ENCODE measurements at regions of chr4 and their contacts with region 1.

Region 1: GRCh38 chr4:184733654-184734524 is at the start of gene CENPU:
- DNase-seq: peak; percentile 96
- H3K4me3 Mint-ChIP-seq: peak within 1 kb of the TSS; percentile 94
- H3K27ac Mint-ChIP-seq: peak within 1 kb of the TSS; percentile 95
- H3K4me1 Mint-ChIP-seq: peaks cover 50% of the 10 kb centered on the region
- H3K27me3 Mint-ChIP-seq: no peaks in the 10 kb centered on the region
- total RNA-seq, gene CENPU: 78.3 and 80.3 TPM in 2 replicates

Region 2: DNA sequence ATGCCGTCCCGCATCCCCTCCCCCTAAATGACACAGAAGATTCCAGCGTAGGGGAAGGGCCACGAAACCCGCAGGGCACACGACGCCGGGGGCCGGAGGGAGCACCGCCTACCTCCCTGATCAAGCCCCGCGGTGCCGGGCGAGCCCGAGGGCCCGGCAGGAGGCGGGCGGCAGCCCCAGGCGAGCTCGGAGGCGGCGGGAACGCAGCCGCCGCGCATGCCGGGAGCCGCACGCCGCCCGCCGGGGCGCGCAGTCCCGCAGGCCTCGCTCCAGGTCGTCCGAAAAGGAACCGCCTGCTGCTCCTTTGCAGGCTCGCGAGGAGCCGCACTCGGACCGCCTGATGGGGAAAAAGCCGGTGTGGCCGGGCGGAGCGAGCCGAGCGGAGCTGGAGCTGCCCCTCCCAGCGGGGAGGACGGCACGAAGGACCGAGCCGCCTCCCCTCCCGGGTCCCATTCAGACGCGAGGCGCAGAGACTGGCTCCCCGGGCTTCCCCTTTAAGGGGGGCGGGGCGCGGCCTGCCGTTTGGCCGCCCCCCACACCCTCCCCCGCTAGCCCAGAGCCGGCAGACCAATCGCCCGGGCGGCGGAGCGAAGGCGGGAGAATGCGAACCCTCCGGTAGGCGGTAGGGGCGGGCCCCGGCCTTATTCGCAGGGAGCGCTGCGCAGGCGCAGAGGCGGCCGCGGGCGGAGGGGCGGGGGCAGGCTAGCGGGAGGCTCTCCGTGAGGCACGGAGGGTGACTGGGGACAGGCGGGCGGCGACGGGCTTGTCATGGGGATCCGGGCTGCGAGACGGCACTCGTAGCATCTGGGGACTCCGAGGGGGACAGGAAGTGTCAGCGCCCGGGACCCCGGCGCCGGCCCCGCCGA is 1229.6 kb before region 1 on chr4:
- intact Hi-C with region 1: loop called (anchors 2 kb)
- DNase-seq: peak; percentile 100
- H3K4me3 Mint-ChIP-seq: peak overlapping the region; percentile 92
- H3K27ac Mint-ChIP-seq: peak overlapping the region; percentile 97
- H3K4me1 Mint-ChIP-seq: peaks cover 23% of the 10 kb centered on the region
- H3K27me3 Mint-ChIP-seq: no peaks in the 10 kb centered on the region

Region 3: DNA sequence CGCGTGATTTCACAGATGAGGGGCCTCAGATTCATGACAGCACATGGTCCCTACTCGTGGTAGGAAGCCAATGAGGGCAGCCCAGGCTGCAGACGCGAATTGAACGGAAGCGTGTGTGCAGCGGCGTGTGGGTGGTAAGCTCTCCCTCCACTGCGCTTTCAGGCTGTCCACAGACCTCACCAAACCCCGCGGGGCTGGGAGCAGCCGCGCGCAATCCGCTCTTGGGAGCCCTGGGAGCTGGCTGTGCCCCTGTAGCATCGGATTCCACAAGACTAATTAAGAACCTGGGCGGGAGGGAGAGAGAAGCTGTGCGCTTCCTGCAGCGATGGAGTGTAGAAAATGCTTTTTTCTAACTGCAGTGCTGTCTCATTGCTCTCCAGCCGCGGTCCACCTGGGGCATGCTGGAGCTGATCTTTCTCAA is 693.9 kb before region 1 on chr4:
- intact Hi-C with region 1: no loop called
- DNase-seq: no peak
- H3K4me3 Mint-ChIP-seq: peak overlapping the region; percentile 49
- H3K27ac Mint-ChIP-seq: no peak overlapping the region
- H3K4me1 Mint-ChIP-seq: peaks cover 15% of the 10 kb centered on the region
- H3K27me3 Mint-ChIP-seq: peaks cover 39% of the 10 kb centered on the region

Region 4: DNA sequence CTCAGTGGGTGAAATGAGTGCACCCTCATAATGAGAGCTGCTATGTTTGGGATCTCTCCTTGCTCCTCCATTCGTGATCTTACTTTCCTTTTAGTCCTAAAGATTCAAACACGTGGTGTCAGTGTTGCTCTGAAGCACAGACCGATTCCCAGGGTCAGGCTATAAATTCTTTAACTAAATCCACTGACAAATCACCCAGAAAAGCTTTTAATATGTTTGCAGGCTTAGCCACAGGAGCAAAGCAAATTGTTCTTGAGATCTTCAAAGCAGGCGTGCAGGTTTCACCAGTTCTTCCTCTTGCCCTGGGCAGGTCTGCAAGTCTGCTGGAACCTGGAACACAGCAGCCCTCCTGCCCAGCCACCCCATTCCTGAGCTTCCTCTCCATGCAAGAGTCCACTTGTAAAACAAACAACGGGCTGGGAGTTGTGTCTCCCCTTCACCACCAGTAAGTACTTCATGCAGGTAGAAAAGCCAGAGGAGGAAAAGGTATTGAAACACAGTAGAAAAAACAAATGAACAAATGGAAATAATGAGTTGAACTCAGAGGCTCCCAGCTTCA is 446.1 kb before region 1 on chr4:
- intact Hi-C with region 1: loop called (anchors 1 kb)
- DNase-seq: no peak
- H3K4me3 Mint-ChIP-seq: peak overlapping the region; percentile 12
- H3K27ac Mint-ChIP-seq: peak overlapping the region; percentile 13
- H3K4me1 Mint-ChIP-seq: peaks cover 53% of the 10 kb centered on the region
- H3K27me3 Mint-ChIP-seq: no peaks in the 10 kb centered on the region

Region 5: DNA sequence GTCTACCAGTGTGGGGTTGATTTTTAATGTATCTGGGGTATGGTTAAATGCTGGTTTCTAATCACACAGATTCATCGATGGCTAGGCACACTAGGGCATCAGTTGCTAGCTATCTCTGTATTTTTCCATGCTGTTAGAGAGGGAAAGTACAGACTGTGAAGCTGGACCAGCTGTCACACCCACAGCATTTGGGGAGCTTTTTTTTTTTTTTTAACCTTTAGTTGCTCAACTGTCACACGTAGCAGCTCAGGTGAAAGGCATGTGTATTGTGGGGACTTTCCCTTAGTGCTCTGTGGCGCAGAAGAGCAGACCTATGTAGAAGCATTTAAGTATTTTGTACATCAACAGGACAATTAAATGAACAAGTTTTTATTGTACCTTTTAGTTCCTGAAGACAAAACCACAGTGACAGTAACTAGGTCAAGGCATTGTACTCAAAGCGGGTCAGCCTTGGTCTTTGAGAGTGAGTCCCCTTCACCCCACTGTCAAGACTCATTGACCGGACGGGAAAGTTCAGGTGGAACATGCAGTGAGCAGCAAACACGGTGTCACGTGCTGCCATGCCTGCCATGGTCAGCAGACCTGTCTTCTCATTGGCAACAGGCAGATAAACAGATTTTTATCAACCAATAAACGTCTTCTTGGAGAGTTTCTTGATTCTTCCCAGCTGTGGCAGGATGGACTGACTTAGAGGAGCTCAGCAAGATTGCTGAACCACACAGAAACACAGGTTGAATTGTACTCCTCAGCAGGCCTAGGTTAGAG is 150.0 kb before region 1 on chr4:
- intact Hi-C with region 1: loop called (anchors 5 kb)
- DNase-seq: peak; percentile 9
- H3K4me3 Mint-ChIP-seq: peak overlapping the region; percentile 20
- H3K27ac Mint-ChIP-seq: peak overlapping the region; percentile 79
- H3K4me1 Mint-ChIP-seq: peaks cover 25% of the 10 kb centered on the region
- H3K27me3 Mint-ChIP-seq: no peaks in the 10 kb centered on the region

Region 6: GRCh38 chr4:185165605-185166063 is 431.7 kb after region 1 on chr4:
- intact Hi-C with region 1: loop called (anchors 1 kb)
- DNase-seq: no peak
- H3K4me3 Mint-ChIP-seq: no peak overlapping the region
- H3K27ac Mint-ChIP-seq: peak overlapping the region; percentile 80
- H3K4me1 Mint-ChIP-seq: peaks cover 20% of the 10 kb centered on the region
- H3K27me3 Mint-ChIP-seq: peaks cover 32% of the 10 kb centered on the region

Region 7: DNA sequence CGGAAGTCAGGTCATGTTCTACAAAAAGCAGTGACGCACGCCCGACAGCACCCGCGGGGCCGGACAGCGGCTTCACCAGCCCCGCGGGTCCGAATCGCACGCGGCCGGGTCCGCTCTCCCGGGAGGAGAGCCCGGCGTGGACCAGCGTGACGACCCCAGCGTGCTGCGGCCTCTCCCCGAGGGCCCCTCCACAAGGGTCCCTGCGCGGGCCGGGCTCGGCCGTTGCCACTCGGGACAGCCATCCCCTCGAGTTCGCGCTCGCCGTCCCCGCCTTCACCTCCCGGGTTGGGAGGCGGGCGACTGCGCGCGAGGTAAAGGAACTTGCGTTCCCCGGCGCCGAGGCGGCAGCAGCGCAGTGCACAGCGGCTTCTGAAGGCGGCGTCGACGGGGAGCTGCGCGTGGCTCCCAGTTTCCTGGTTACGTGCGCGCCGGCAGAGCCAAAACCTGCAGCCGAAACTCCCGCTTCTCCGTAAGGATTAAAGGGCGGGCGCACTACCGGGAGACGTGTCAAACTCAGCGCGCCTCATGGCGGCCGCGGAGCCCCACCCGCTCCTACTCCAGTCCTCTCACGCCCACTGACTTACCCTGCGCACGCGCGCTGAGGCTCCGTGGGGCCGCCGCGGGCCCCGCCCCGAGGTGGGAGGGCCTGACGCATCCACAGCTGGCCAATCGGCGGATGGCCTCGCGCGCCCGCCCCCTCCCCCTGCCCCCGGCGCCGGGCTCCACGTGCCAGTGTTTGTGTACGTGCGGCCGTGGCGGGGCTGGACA is 662.3 kb after region 1 on chr4:
- intact Hi-C with region 1: loop called (anchors 1 kb)
- DNase-seq: peak; percentile 98
- H3K4me3 Mint-ChIP-seq: peak overlapping the region; percentile 94
- H3K27ac Mint-ChIP-seq: peak overlapping the region; percentile 97
- H3K4me1 Mint-ChIP-seq: peaks cover 69% of the 10 kb centered on the region
- H3K27me3 Mint-ChIP-seq: peaks cover 2% of the 10 kb centered on the region

Measured in activated T-helper 1 cell treated with anti-CD3 and anti-CD28 coated beads, Interleukin-12 subunit alpha, Interleukin-12 subunit beta, Interleukin-2, Interleukin-4 antibody, amounts not matched to agents 30 ng/mL and 10 ng/mL and 1 ng/mL, durations not matched to agents 14 hours and 24 hours and 36 hours (primary cell).